PC-3 (cell line): ENCODE measurements at regions of chr12 and their contacts with region 1.

Region 1: DNA sequence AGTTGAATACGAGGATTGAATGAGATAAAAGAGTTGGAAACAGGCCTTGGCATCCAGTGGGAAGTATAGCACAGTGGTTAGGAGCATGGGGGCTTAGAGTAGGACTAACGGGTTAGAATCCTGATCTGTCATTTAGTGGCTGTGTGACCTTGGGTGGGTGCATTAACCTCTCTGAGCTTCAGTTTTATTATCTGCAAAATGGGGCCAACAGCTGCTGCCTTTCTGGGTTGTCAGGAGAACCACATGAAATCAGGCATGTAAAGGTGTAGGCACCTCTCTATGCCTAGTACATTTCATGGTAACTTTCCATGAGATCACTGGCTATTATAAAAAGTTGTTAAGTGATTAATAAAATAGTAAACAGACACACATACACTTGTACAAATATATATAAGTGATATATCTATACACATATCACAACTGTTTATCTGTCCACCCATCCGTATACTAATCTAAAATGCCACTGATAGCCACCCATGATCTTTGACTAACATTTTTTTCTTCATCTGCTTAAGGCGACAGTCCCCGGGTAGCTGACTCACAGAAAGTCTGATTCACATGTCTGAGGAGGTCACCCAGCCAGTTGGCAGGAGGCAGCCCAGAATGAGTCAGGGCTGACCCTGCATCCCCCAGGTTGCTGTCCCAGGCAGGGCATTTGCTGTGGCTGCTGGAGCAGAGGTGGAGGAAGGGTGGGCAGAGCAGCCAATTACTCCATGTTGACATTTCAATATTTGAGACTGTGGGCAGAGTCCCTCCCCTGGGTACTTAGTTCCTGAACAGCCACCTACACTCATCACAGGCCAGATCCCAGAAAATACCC is 125.6 kb upstream of the NOS1 start:
- DNase-seq: peak; percentile 97
- ATAC-seq: peak; percentile 94
- H3K4me3 ChIP-seq: no peak overlapping the region; the same call in 1 of the 2 replicates
- H3K27ac ChIP-seq: peak overlapping the region; percentile 78
- H3K4me1 ChIP-seq: peaks cover 26% of the 10 kb centered on the region
- H3K27me3 ChIP-seq: no peaks in the 10 kb centered on the region
- CTCF ChIP-seq: no peak

Region 2: DNA sequence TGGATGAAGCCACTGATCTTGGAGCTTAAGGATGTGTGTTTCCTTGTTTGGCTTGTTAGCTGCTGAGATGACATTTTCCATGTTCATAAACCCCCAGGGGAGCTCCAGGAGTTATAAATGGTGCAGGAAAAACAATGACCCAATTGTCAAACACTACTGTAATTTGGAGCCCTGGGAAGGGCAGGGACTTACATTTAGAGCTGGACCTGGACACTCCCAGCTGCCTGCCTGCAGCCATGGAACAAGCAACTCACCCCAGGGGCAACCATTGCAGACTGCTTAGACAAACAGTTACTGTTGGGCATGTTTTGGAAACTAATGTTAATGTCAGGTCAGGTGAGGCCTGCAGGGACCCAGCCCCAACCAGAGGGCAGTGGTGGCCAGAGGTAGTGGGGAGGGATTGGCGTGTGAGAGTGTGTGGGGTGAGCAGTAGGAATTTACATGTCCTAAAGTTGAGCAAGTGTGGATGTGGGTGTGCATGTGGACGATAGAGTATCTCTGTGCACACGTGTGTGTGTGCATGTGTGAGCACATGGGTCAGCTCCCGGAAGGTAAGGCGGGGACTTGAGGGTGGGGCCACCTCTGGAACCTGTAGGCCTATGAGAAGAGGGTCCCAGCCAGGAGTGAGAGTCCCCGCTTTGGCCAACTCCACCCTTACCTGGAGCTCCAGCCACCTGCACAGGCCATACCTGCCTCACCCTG is 39.2 kb before region 1 on chr12:
- CTCF ChIA-PET with region 1: no interaction called
- POLR2A ChIA-PET with region 1: no interaction called
- intact Hi-C with region 1: loop called (anchors 2 kb)
- DNase-seq: no peak
- ATAC-seq: peak; percentile 68
- H3K4me3 ChIP-seq: no peak overlapping the region
- H3K27ac ChIP-seq: no peak overlapping the region
- H3K4me1 ChIP-seq: no peaks in the 10 kb centered on the region
- H3K27me3 ChIP-seq: no peaks in the 10 kb centered on the region
- CTCF ChIP-seq: no peak